ENCODE measurements at regions of chr1 and their contacts with region 1.

Region 1: DNA sequence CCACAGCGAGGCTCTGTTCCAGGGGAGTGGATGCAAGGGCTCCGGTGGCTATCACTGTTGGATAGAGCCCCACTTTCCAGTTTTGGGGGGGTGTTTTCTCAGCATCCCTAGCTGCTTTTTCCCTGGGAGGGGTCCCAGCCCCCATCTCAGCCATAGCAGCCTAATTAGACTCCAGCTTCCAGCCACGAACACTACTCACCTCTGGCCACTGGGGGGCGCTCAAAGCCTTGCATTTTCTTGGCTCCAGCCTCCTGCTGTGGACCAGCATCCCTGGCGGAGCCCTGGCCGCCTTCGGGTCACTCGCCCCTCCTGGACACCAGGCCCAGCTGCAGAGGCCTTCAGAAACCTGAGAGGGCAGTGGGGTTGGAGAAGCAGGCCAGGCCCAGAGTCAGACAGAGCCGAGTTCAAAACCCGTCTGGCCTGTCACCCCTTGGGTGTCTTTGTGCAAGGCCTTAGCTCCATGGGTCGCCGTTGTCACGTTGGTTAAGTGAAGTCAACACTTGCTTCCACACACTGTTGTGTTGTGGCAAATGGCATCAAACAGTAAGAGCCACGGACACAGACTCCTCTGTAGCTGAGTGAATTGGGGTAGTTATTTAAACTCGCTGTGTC is 93.5 kb upstream of the ACTL8 start:
- DNase-seq: peak; percentile 53
- ATAC-seq: peak; percentile 49
- H3K4me3 Mint-ChIP-seq: no peak overlapping the region
- H3K27ac Mint-ChIP-seq: no peak overlapping the region
- H3K4me1 Mint-ChIP-seq: peaks cover 4% of the 10 kb centered on the region
- H3K27me3 Mint-ChIP-seq: no peaks in the 10 kb centered on the region
- CTCF ChIP-seq: peak; percentile 57

Region 2: DNA sequence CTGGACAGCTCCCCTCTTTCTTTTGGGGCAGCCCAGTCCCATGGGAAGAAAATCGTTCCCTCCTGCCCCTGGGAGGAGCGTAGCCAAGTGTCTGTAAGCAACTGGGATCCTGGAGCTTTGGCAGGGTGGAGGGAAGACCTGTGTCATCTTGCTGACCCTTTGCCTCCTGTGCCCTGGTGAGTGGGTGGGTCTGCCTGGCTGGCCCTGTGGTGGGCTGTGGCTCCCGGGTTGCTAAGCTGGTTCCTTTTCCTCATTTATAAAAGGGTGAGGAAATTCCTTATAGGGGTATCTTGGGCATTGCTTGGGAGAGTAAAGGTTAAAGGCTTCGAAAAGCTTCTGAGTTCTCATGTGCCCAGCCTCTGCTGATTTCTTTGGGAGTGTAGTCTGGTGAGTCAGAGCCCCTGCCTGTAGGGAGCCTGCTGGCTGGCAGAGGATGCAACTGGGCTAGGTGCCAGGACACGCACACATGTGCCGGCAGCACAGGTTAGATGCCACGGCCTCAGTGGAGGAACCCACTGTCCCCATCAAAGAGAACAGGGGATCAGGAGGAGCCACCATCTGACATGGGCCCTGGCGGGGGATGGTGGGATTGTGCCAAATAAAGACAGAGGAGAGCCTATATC is 36.9 kb before region 1 on chr1:
- CTCF ChIA-PET with region 1: no interaction called
- POLR2A ChIA-PET with region 1: no interaction called
- intact Hi-C with region 1: no loop called
- DNase-seq: no peak
- ATAC-seq: no peak
- H3K4me3 Mint-ChIP-seq: no peak overlapping the region
- H3K27ac Mint-ChIP-seq: no peak overlapping the region
- H3K4me1 Mint-ChIP-seq: peaks cover 7% of the 10 kb centered on the region
- H3K27me3 Mint-ChIP-seq: peaks cover 2% of the 10 kb centered on the region
- CTCF ChIP-seq: no peak

Region 3: DNA sequence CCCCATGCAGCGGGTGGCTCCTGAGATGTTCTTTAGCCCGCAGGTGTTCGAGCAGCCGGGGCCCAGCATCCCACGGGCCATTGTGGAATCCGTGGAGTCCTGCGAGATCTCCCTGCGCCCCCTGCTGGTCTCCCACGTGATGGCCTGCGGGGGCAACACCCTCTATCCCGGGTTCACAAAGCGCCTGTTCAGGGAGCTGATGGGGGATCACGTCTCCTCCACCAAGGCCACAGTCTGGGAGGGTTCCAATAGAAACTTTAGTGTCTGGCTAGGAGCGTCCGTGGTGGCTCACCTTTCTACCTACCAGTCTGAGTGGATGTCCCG is 164.5 kb after region 1 on chr1:
- CTCF ChIA-PET with region 1: no interaction called
- POLR2A ChIA-PET with region 1: no interaction called
- intact Hi-C with region 1: loop called (anchors 10 kb)
- DNase-seq: no peak
- ATAC-seq: no peak
- H3K4me3 Mint-ChIP-seq: no peak overlapping the region
- H3K27ac Mint-ChIP-seq: no peak overlapping the region
- H3K4me1 Mint-ChIP-seq: no peaks in the 10 kb centered on the region
- H3K27me3 Mint-ChIP-seq: peaks cover 31% of the 10 kb centered on the region
- CTCF ChIP-seq: no peak

Region 4: GRCh38 chr1:18100491-18101063 is 438.9 kb after region 1 on chr1:
- CTCF ChIA-PET with region 1: interaction called, 16 read pairs
- POLR2A ChIA-PET with region 1: no interaction called
- intact Hi-C with region 1: no loop called
- DNase-seq: no peak
- ATAC-seq: no peak
- H3K4me3 Mint-ChIP-seq: no peak overlapping the region
- H3K27ac Mint-ChIP-seq: no peak overlapping the region
- H3K4me1 Mint-ChIP-seq: no peaks in the 10 kb centered on the region
- H3K27me3 Mint-ChIP-seq: peaks cover 13% of the 10 kb centered on the region
- CTCF ChIP-seq: no peak

Region 5: GRCh38 chr1:18299441-18300338 is 638.0 kb after region 1 on chr1:
- CTCF ChIA-PET with region 1: no interaction called
- POLR2A ChIA-PET with region 1: no interaction called
- intact Hi-C with region 1: loop called (anchors 10 kb)
- DNase-seq: no peak
- ATAC-seq: no peak
- H3K4me3 Mint-ChIP-seq: no peak overlapping the region
- H3K27ac Mint-ChIP-seq: no peak overlapping the region
- H3K4me1 Mint-ChIP-seq: no peaks in the 10 kb centered on the region
- H3K27me3 Mint-ChIP-seq: peaks cover 23% of the 10 kb centered on the region
- CTCF ChIP-seq: peak; percentile 18

Region 6: DNA sequence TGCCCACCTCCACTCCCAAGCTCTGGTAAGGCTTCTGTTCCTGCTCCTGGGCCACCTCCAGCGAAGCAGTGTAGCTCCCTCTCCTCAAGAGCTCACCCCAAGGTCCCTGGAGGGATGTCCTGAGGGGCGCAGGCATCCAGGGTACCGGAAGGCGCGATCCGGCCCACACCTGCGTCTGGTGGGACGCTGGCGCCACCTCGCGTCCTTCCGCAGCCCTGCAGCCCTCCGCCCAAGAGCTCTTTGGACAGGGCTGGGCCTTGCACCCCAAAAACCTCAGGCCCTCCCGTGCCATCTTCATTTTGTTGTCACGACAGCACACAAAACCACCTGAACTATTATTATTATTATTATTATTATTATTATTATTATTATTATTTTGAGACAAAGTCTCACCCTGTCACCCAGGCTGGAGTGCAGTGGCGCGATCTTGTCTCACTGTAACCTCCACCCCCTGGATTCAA is 919.8 kb after region 1 on chr1:
- CTCF ChIA-PET with region 1: interaction called, 4 read pairs
- POLR2A ChIA-PET with region 1: no interaction called
- intact Hi-C with region 1: loop called (anchors 5 kb)
- DNase-seq: no peak
- ATAC-seq: no peak
- H3K4me3 Mint-ChIP-seq: no peak overlapping the region
- H3K27ac Mint-ChIP-seq: no peak overlapping the region
- H3K4me1 Mint-ChIP-seq: no peaks in the 10 kb centered on the region
- H3K27me3 Mint-ChIP-seq: peaks cover 9% of the 10 kb centered on the region
- CTCF ChIP-seq: no peak